IMR-90 (cell line): ENCODE measurements at regions of chr3 and their contacts with region 1.

Region 1: GRCh38 chr3:51340013-51340856 is 44.9 kb upstream of the MANF start:
- DNase-seq: peak; percentile 91
- ATAC-seq: peak; percentile 82
- H3K4me3 ChIP-seq: no peak overlapping the region
- H3K27ac ChIP-seq: peak overlapping the region; percentile 92
- H3K4me1 ChIP-seq: peaks cover 24% of the 10 kb centered on the region
- H3K27me3 ChIP-seq: no peaks in the 10 kb centered on the region; the same call in 1 of the 2 replicates
- CTCF ChIP-seq: no peak
- POLR2A ChIP-seq: no peak
- RAD21 ChIP-seq: no peak

Region 2: GRCh38 chr3:51063053-51063452 is 277.2 kb before region 1 on chr3:
- CTCF ChIA-PET with region 1: no interaction called
- POLR2A ChIA-PET with region 1: no interaction called
- dilution Hi-C with region 1: no loop called
- in situ Hi-C with region 1: no loop called
- intact Hi-C with region 1: no loop called
- DNase-seq: no peak
- ATAC-seq: no peak
- H3K4me3 ChIP-seq: no peak overlapping the region
- H3K27ac ChIP-seq: no peak overlapping the region
- H3K4me1 ChIP-seq: no peaks in the 10 kb centered on the region
- H3K27me3 ChIP-seq: no peaks in the 10 kb centered on the region
- CTCF ChIP-seq: no peak
- POLR2A ChIP-seq: no peak
- RAD21 ChIP-seq: no peak

Region 3: GRCh38 chr3:51353691-51354090 is 13.5 kb after region 1 on chr3:
- CTCF ChIA-PET with region 1: interaction called, 3 read pairs
- POLR2A ChIA-PET with region 1: no interaction called
- dilution Hi-C with region 1: no loop called
- in situ Hi-C with region 1: no loop called
- intact Hi-C with region 1: loop called (anchors 1 kb)
- DNase-seq: peak; percentile 37
- ATAC-seq: peak; percentile 50; the same call in 1 of the 2 replicates
- H3K4me3 ChIP-seq: no peak overlapping the region
- H3K27ac ChIP-seq: no peak overlapping the region
- H3K4me1 ChIP-seq: no peaks in the 10 kb centered on the region
- H3K27me3 ChIP-seq: peaks cover 6% of the 10 kb centered on the region; the same call in 1 of the 2 replicates
- CTCF ChIP-seq: no peak
- POLR2A ChIP-seq: no peak
- RAD21 ChIP-seq: no peak

Region 4: GRCh38 chr3:51434746-51435327 is 94.6 kb after region 1 on chr3:
- CTCF ChIA-PET with region 1: no interaction called
- POLR2A ChIA-PET with region 1: no interaction called
- dilution Hi-C with region 1: no loop called
- in situ Hi-C with region 1: no loop called
- intact Hi-C with region 1: no loop called
- DNase-seq: peak; percentile 41
- ATAC-seq: 0 out of 2 replicates have a peak, but pooled peaks have one; percentile 59
- H3K4me3 ChIP-seq: no peak overlapping the region
- H3K27ac ChIP-seq: no peak overlapping the region
- H3K4me1 ChIP-seq: no peaks in the 10 kb centered on the region
- H3K27me3 ChIP-seq: no peaks in the 10 kb centered on the region
- CTCF ChIP-seq: peak; percentile 47
- POLR2A ChIP-seq: no peak
- RAD21 ChIP-seq: no peak

Region 5: GRCh38 chr3:51670823-51671733 is 330.8 kb after region 1 on chr3 and contains the start of gene TEX264:
- CTCF ChIA-PET with region 1: no interaction called
- POLR2A ChIA-PET with region 1: no interaction called
- dilution Hi-C with region 1: no loop called
- in situ Hi-C with region 1: no loop called
- intact Hi-C with region 1: no loop called
- DNase-seq: peak; percentile 71
- ATAC-seq: peak; percentile 82
- H3K4me3 ChIP-seq: peak within 1 kb of the TSS; percentile 87
- H3K27ac ChIP-seq: peak within 1 kb of the TSS; percentile 79
- H3K4me1 ChIP-seq: peaks cover 12% of the 10 kb centered on the region
- H3K27me3 ChIP-seq: no peaks in the 10 kb centered on the region
- CTCF ChIP-seq: no peak
- POLR2A ChIP-seq: peak; percentile 55; the same call in 1 of the 2 replicates
- RAD21 ChIP-seq: no peak
- total RNA-seq, gene TEX264: 26.9 and 30.3 TPM in 2 replicates

Region 6: DNA sequence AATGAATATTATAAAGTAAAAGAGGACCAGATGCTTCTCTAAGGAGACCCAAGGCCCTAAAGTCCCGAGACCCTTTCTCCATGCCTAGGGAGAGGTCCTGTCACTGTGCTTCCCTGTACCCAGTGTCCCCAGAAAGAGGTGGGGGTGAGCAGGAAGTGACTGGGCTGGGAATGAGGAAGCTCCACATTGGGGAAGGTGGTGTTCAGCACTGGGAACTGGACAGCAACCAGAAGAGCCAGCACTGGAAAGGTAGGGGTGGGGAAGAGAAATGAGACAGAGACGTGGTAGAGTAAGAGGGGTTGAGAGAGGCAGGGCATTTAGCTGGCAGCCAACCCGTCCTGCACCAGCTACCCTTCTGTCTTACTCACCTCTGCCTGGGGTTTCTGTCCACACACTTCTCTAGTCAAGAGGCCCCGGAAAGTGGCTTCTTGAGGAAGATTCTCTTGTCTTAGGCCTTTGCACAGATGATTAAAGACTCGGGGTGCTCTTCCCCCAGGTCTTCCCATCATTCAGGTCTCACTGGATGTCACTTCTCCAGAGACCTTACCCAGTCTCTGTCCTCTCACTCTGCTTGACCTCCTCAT is 589.3 kb after region 1 on chr3:
- CTCF ChIA-PET with region 1: no interaction called
- POLR2A ChIA-PET with region 1: no interaction called
- dilution Hi-C with region 1: no loop called
- in situ Hi-C with region 1: no loop called
- intact Hi-C with region 1: loop called (anchors 10 kb)
- DNase-seq: no peak
- ATAC-seq: peak; percentile 56
- H3K4me3 ChIP-seq: no peak overlapping the region
- H3K27ac ChIP-seq: no peak overlapping the region
- H3K4me1 ChIP-seq: no peaks in the 10 kb centered on the region
- H3K27me3 ChIP-seq: no peaks in the 10 kb centered on the region
- CTCF ChIP-seq: no peak
- POLR2A ChIP-seq: no peak
- RAD21 ChIP-seq: no peak